SK-N-SH (cell line): ENCODE measurements at regions of chr4 and their contacts with region 1.

Region 1: DNA sequence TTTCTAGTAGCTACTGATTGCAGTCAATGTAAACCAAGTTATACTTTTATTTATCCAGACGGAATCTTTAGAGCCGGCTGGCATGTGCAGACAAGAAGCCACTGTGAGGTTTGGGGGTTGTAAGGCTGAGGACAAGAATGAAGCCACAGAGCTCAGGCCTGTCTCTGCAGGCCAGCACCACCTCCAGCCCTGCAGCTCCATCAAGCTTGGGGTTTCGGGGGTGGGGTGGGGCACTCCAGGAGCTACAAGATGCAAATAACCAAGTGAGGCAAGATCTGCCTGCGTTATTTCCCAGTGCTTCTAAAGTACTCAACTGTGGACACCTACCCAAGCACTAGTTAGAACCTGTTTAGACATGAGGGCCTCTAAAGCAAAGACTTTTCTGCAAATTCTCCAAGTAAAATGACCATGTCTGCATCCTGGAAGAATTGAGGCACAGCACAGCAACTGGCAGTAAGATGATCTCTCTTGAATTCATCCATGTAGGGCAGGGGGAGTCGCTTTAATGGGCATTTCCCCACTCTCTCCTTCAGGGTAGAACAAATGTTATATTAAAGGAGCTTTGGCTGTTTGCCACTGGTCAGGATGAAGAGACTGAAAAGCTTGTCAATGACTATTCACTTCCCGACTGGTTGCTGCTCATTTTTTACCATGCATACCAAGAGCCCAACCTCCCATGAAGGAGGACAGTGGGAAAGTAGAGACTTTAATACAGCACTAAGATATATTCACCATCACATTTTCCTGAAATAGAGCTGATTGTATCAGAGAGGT is 222.5 kb downstream of the MGST2 start:
- DNase-seq: peak; percentile 23
- H3K4me3 ChIP-seq: peak overlapping the region in 1 of 2 experiments; percentile 22; a peak in 1 of 4 replicates
- H3K27ac ChIP-seq: peak overlapping the region; percentile 54 to 98
- H3K4me1 ChIP-seq: peaks cover 36 to 37% of the 10 kb centered on the region in 2 experiments
- H3K27me3 ChIP-seq: no peaks in the 10 kb centered on the region
- CTCF ChIP-seq: no peak
- EP300 ChIP-seq: no peak; a peak in 1 of 4 replicates
- RAD21 ChIP-seq: no peak

Region 2: GRCh38 chr4:139550724-139551429 is 337.3 kb before region 1 on chr4:
- CTCF ChIA-PET with region 1: no interaction called
- POLR2A ChIA-PET with region 1: no interaction called
- DNase-seq: no peak
- H3K4me3 ChIP-seq: no peak overlapping the region
- H3K27ac ChIP-seq: no peak overlapping the region
- H3K4me1 ChIP-seq: peaks cover 25 to 27% of the 10 kb centered on the region in 2 experiments; a peak in 3 of 4 replicates
- H3K27me3 ChIP-seq: no peaks in the 10 kb centered on the region
- CTCF ChIP-seq: no peak
- EP300 ChIP-seq: no peak
- RAD21 ChIP-seq: no peak

Region 3: GRCh38 chr4:139901531-139902320 is 13.6 kb after region 1 on chr4:
- CTCF ChIA-PET with region 1: interaction called, 3 read pairs
- POLR2A ChIA-PET with region 1: interaction called, 24 read pairs
- DNase-seq: peak; percentile 46
- H3K4me3 ChIP-seq: peak overlapping the region in 1 of 2 experiments; percentile 36
- H3K27ac ChIP-seq: peak overlapping the region; percentile 36 to 94; a peak in 3 of 4 replicates
- H3K4me1 ChIP-seq: peaks cover 0 to 43% of the 10 kb centered on the region in 2 experiments; a peak in 2 of 4 replicates
- H3K27me3 ChIP-seq: no peaks in the 10 kb centered on the region
- CTCF ChIP-seq: no peak
- EP300 ChIP-seq: no peak
- RAD21 ChIP-seq: peak; percentile 12; the same call in 1 of the 2 replicates

Region 4: GRCh38 chr4:139943277-139943676 is 55.1 kb after region 1 on chr4:
- CTCF ChIA-PET with region 1: no interaction called
- POLR2A ChIA-PET with region 1: interaction called, 10 read pairs
- DNase-seq: no peak
- H3K4me3 ChIP-seq: no peak overlapping the region
- H3K27ac ChIP-seq: peak overlapping the region; percentile 19 to 100; a peak in 3 of 4 replicates
- H3K4me1 ChIP-seq: peaks cover 5 to 31% of the 10 kb centered on the region in 2 experiments; a peak in 3 of 4 replicates
- H3K27me3 ChIP-seq: no peaks in the 10 kb centered on the region
- CTCF ChIP-seq: no peak
- EP300 ChIP-seq: no peak
- RAD21 ChIP-seq: no peak

Region 5: DNA sequence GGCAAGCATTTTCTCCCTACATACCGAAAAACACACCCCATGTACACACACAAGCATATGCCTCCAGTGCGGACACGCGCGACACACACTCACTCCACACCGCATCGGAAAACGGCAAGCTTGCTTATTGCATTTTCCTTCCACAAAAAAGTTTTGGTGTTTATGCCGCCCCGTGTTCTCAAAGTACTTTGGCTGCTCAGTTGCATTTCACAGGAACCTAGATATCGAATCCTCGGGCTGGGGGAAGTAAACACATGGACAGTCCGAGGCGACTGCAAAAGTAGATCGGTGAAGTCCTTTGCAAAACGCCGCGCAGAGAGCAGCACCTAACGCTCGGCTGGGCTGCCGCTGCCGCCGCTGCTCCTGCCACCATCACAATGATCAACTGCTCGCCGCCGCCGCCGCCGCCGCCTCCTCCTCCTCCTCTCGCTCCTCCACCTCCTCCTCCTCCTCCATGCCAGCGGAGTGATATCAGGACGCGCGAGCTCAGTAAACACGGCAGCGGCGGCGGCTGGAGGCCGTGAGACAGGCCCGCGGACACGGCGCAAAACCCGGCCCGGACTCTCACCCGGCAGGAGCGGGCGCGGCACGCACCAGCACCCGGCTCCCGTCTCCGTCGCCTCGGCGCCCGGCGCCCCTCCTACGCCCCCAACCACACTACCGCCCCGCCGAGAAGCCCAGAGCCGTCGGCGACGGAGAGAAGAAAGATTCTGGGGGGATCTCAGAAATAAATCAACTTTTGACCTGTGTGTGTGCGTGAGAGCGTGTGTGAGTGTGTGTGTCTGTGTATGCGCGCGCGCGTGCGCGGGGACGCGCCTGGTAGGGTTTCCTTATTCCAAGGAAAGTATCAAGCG is 265.8 kb after region 1 on chr4 and contains the start of gene MAML3:
- CTCF ChIA-PET with region 1: interaction called, 3 read pairs
- POLR2A ChIA-PET with region 1: interaction called, 14 read pairs
- DNase-seq: peak; percentile 90
- H3K4me3 ChIP-seq: peak within 1 kb of the TSS; percentile 94 to 97
- H3K27ac ChIP-seq: peak within 1 kb of the TSS; percentile 98 to 99
- H3K4me1 ChIP-seq: peaks cover 0 to 17% of the 10 kb centered on the region in 2 experiments; a peak in 2 of 4 replicates
- H3K27me3 ChIP-seq: no peaks in the 10 kb centered on the region
- CTCF ChIP-seq: no peak
- EP300 ChIP-seq: peak; percentile 18 to 79; a peak in 3 of 4 replicates
- RAD21 ChIP-seq: no peak; the same call in 1 of the 2 replicates
- polyA plus RNA-seq, gene MAML3: 5.3 and 5.6 TPM in 2 replicates